Right lobe of liver (tissue), 6 donors: ENCODE measurements at regions of chr7 and their contacts with region 1.

Region 1: GRCh38 chr7:100570954-100571828 is 2.5 kb downstream of the SAP25 start:
- DNase-seq: peak in 2 of 3 donors; percentile 51 to 76
- ATAC-seq: peak in 2 of 4 donors; percentile 0
- H3K4me3 ChIP-seq: peak overlapping the region in 2 of 3 donors; percentile 49
- H3K27ac ChIP-seq: peak overlapping the region in 2 of 3 donors; percentile 90 to 96
- H3K4me1 ChIP-seq: peaks cover 0 to 46% (median 22%) of the 10 kb centered on the region in 4 donors
- H3K27me3 ChIP-seq: no peaks in the 10 kb centered on the region
- CTCF ChIP-seq: no peak
- POLR2A ChIP-seq: peak; percentile 59

Region 2: DNA sequence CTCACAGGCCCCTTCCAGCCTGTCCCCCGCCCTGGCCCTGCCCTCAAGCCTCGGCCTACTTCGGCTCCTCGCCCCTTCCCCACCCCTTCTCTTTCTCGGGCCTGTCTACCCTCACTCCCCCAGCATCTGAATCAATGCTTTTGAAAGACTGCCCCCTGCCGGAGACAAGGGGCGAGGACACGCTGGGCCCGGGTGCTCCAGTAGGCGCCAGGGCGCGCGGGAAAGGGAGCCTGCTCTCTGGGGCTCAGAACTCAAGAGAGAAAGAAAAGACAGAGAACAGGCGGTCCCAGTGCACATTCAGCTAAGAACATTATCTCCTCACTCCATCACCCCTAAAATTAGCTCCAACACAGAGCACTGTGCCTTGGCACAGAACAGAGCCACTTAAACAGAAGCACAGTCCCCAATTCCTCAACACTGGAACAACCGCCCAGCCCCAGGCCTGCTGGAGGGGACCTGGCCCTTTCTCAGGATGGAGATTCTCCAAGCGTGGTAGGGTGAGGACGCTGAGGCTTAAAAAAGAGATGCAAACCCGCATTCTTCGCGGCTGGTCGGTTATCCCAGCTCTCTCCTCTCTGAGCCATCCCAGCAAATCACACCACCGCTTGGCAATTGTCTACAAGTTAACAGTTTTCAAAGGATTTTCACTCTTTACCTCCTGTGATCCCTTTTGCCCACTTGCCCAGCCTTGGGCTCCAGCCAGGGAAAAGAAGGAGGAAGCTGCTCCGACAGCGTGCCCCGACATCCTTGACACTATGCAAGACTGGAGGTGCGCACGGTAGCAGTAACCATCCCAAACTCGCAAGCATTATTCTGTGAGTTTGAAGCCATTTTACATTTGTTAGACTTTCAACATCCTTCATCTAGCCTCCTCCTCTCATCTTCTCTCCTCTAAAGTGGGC is 120.7 kb after region 1 on chr7:
- intact Hi-C with region 1: loop called (anchors 5 to 10 kb)
- DNase-seq: peak; percentile 81 to 83 (median 82)
- ATAC-seq: peak; percentile 80 to 86 (median 84)
- H3K4me3 ChIP-seq: no peak overlapping the region
- H3K27ac ChIP-seq: no peak overlapping the region
- H3K4me1 ChIP-seq: peaks cover 2 to 19% (median 10%) of the 10 kb centered on the region in 4 donors
- H3K27me3 ChIP-seq: no peaks in the 10 kb centered on the region
- CTCF ChIP-seq: peak; percentile 85 to 91 (median 90)
- POLR2A ChIP-seq: no peak